CD4-positive, alpha-beta T cell (primary cell): ENCODE measurements at regions of chr2 and their contacts with region 1.

Region 1: GRCh38 chr2:30155889-30156658 is 9.3 kb downstream of the YPEL5 start:
- DNase-seq: no peak
- ATAC-seq: no peak
- H3K4me3 ChIP-seq: no peak overlapping the region
- H3K4me3 Mint-ChIP-seq: peak overlapping the region; percentile 11
- H3K27ac ChIP-seq: no peak overlapping the region
- H3K27ac Mint-ChIP-seq: peak overlapping the region; percentile 38
- H3K4me1 ChIP-seq: peaks cover 6% of the 10 kb centered on the region
- H3K4me1 Mint-ChIP-seq: peaks cover 80% of the 10 kb centered on the region
- H3K27me3 ChIP-seq: no peaks in the 10 kb centered on the region
- H3K27me3 Mint-ChIP-seq: no peaks in the 10 kb centered on the region
- CTCF ChIP-seq: no peak

Region 2: DNA sequence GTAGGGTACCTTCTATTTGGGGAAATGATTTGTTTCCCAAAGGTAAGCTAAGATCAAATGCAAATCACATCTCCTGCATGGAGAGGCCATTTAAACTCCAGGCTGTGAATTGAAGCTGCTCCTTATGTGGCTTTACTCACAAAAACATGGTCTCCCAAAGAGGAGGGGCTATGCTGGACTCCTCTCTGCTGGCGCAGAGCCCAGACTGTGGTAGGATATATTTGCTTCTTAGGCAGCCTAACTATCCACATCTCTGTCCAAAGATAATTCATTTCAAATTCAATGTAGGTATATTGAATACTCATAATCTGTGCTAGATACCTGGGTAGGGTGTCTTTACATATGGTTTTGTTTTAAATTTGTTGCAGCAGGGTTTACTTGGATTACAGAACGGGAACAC is 593.2 kb before region 1 on chr2:
- CTCF ChIA-PET with region 1: no interaction called
- POLR2A ChIA-PET with region 1: no interaction called
- intact Hi-C with region 1: no loop called
- DNase-seq: no peak
- ATAC-seq: no peak
- H3K4me3 ChIP-seq: no peak overlapping the region
- H3K4me3 Mint-ChIP-seq: no peak overlapping the region
- H3K27ac ChIP-seq: no peak overlapping the region
- H3K27ac Mint-ChIP-seq: no peak overlapping the region
- H3K4me1 ChIP-seq: no peaks in the 10 kb centered on the region
- H3K4me1 Mint-ChIP-seq: no peaks in the 10 kb centered on the region
- H3K27me3 ChIP-seq: peaks cover 0 to 5% of the 10 kb centered on the region in 2 experiments
- H3K27me3 Mint-ChIP-seq: peaks cover 7% of the 10 kb centered on the region
- CTCF ChIP-seq: no peak

Region 3: GRCh38 chr2:31233741-31234682 is 1077.9 kb after region 1 on chr2 and contains the start of gene EHD3:
- CTCF ChIA-PET with region 1: no interaction called
- POLR2A ChIA-PET with region 1: no interaction called
- intact Hi-C with region 1: loop called in 1 of 2 experiments (anchors 10 kb)
- DNase-seq: peak; percentile 51 to 85 (median 71)
- ATAC-seq: peak; percentile 97
- H3K4me3 ChIP-seq: peak within 1 kb of the TSS; percentile 73
- H3K4me3 Mint-ChIP-seq: peak within 1 kb of the TSS; percentile 86
- H3K27ac ChIP-seq: no peak within 1 kb of the TSS
- H3K27ac Mint-ChIP-seq: peak within 1 kb of the TSS; percentile 78
- H3K4me1 ChIP-seq: peaks cover 20% of the 10 kb centered on the region
- H3K4me1 Mint-ChIP-seq: peaks cover 31% of the 10 kb centered on the region
- H3K27me3 ChIP-seq: no peaks in the 10 kb centered on the region
- H3K27me3 Mint-ChIP-seq: peaks cover 9% of the 10 kb centered on the region
- CTCF ChIP-seq: no peak
- total RNA-seq, gene EHD3: 1.4 to 1.7 TPM